Motor neuron (in vitro differentiated cells): ENCODE measurements at regions of chr7 and their contacts with region 1.

Region 1: DNA sequence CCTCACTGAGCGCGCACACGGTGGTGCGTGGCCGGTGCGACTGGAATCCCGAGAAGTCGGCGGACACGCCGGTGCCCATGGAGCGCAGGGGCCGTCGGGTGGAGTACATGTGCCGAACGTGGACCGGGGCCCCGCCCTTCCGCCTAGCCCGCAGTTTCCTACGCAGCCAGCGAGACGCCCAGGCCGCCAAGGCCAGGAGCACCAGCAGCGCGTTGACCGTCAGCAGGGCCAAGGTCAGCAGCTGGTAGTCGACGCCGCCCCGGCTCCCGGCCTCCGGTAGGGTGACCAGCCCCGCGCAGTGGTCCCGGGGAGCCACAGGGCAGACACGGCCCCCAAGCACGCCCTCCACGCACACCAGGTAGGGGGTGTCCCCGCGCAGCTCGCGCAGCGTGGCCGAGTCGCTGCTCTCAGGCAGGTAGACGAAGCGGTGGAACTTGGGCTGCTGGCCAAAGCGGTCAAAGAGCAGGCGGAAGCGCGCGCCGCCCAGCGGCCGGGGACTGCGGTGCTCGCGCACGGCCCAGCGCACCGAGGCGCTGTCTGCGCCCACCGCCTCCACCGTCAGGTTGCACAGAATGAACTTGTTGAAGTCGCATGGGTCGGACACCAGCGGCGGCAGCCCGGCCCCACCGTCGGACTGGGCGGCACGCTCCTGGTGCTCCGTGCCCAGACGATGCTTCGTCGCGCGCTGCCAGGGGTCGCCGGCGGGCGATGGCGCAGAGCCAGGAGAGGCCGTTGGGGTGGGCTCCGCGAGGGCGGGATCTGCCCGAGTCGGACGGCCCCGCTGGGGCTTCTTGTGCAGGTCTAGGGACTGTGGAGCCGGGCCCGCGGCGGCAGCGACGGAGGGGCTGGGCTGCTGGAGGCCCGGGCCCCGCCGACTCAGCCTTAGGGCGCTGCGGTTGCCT is 2.2 kb downstream of the TRIL start:
- ATAC-seq: peak; percentile 32 to 83 (median 72)
- H3K4me3 ChIP-seq: peak overlapping the region; percentile 19 to 44 (median 30)
- H3K27ac ChIP-seq: no peak overlapping the region
- H3K4me1 ChIP-seq: peaks cover 0 to 6% of the 10 kb centered on the region in 2 donors

Region 2: DNA sequence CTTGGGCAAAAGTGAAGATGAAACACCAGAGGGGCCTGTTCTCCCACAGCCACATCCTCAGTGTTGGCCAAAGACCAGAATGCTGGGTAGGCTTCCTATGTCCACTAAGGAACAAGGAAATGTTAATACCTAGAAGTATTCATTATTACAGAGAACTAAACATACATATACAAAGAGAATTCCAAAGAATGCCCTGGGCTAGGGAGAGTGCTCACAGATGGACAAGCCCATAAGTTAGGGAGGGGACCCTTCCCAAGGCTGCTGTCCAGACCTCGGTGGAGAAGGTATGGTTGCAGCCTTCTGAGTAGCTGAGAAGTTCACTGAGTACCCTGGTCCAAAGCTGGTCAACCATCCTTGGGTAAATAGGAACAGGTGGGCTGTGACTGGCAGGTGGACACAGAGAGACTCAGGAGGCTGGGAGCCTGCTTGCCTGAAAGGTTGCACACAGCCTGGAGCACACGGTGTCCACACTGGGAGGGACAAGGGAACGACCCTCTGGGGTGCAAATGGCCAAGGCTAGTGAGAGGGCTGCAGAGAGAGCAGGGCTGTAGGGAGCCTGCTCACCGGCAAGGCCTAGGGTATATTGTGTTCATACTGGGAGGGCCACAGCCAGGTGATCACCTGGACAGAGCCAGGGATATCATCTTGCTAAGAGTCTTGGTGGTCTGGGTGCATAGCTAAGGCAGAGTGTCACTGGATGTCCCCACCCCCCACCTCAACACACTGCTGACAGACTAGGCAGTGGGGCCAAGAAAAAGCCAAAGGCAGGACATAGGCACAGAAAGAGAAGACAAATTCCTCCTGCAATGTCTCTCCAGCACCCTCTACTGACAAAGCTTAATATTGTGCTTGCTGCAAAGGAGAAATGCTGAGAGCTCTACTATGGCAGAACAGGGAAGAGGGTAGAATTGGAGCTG is 150.0 kb after region 1 on chr7:
- in situ Hi-C with region 1: loop called in 2 of 9 experiments (anchors 10 kb)
- ATAC-seq: peak; percentile 74 to 87 (median 82)
- H3K4me3 ChIP-seq: no peak overlapping the region
- H3K27ac ChIP-seq: no peak overlapping the region
- H3K4me1 ChIP-seq: no peaks in the 10 kb centered on the region